ENCODE measurements at regions of chr16 and their contacts with region 1.

Region 1: GRCh38 chr16:35391328-35391727 is 1931.9 kb downstream of the TP53TG3F start:
- DNase-seq: peak in 1 of 2 donors; percentile 34
- H3K4me3 ChIP-seq: no peak overlapping the region
- CTCF ChIP-seq: no peak
- POLR2A ChIP-seq: no peak

Region 2: GRCh38 chr16:35239561-35239960 is 151.8 kb before region 1 on chr16:
- intact Hi-C with region 1: loop called (anchors 10 kb)
- DNase-seq: no peak
- H3K4me3 ChIP-seq: no peak overlapping the region
- CTCF ChIP-seq: no peak
- POLR2A ChIP-seq: no peak

Region 3: DNA sequence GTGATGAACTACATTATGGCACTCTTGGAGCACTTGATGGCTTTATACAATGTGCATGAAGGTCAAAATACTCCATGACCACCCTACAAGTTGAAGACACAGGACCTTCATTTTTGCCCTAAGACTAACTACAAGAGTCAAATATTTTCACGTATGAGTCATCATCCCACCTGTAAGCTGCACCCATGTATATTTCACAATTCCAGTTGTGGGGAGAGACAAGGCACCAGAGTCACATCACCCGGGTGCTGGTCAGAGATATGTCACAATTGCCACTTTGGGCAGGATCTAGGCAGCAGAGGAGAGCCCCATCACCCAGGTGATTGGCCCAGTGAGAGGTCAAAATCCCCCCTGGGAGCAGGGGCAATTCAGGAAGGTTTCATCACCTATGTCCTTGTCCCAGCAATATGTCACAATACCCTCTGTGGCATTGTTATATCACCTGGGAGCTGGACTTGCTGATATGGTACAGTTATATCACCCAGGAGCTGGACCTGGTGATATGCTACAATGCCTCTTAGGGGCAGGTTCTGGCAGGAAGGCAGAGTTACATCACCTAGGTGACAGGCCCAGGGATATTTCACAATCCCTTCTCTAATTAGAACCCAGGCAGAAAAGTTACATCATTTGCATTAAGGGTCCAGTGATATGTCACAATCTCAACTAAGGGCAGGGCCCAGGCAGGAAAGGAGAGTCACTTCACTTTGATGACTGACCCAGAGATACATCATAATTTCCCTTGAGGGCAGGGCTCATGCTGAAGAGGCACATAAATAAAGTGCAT is 92.7 kb before region 1 on chr16:
- intact Hi-C with region 1: no loop called
- DNase-seq: no peak
- H3K4me3 ChIP-seq: no peak overlapping the region
- CTCF ChIP-seq: no peak
- POLR2A ChIP-seq: no peak

Region 4: GRCh38 chr16:35339337-35339736 is 52.0 kb before region 1 on chr16:
- intact Hi-C with region 1: no loop called
- DNase-seq: no peak
- H3K4me3 ChIP-seq: no peak overlapping the region
- CTCF ChIP-seq: no peak
- POLR2A ChIP-seq: no peak

Measured in lower leg skin (tissue), 4 donors.